AG04449 (cell line): ENCODE measurements at regions of chr17 and their contacts with region 1.

Region 1: GRCh38 chr17:78013683-78014467 is 55.4 kb downstream of the TNRC6C start:
- DNase-seq: peak; percentile 29
- H3K4me3 ChIP-seq: no peak overlapping the region
- CTCF ChIP-seq: peak; percentile 55

Region 2: GRCh38 chr17:77429919-77430752 is 583.7 kb before region 1 on chr17:
- CTCF ChIA-PET with region 1: interaction called, 11 read pairs
- POLR2A ChIA-PET with region 1: no interaction called
- DNase-seq: peak; percentile 97
- H3K4me3 ChIP-seq: no peak overlapping the region
- CTCF ChIP-seq: peak; percentile 77

Region 3: GRCh38 chr17:77528516-77529327 is 485.2 kb before region 1 on chr17:
- CTCF ChIA-PET with region 1: interaction called, 11 read pairs
- POLR2A ChIA-PET with region 1: no interaction called
- DNase-seq: no peak
- H3K4me3 ChIP-seq: peak overlapping the region; percentile 51
- CTCF ChIP-seq: no peak

Region 4: DNA sequence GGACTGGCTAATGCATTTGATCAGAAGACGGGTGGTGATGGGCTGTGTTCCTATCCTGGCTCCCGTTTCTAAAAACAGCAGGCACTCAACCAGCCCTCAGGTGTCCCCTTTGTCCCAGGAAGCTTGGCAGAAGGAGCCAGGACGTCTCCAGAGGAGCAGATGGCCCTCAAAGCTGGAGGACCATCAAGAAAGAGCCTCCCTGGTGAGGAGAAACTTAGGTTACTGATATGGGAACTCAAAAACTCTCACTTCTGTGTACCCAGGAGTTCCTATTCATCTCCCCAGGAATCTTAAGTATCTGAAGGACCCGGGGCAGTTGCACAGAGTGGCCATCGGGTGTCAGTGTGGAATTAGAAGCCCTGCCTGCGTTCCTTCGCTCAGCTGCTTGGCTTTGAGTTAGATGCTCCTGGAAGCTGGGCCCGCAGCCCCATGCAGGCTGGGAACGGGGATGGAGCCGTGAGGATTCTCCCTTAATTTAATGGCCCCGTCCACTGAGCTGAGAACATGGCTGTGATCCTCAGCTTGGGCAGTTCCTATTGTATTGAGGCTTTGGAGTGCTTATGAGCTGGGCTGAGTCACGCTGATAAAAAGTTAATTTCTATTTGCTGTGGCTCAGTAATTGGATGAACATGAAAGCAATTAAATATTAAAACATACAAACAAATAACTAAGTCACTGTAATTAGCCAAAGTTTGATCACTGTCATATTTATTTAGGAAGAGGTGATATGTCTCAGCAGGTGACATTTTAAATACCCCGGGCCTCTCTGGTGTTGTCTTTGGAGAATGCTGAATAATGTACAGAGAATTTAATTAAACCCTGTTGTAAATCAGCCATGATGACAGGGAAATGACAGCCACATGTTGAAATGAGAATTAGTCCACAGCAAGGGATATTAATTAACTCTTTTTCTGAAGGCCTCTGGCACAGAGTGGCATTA is 471.1 kb before region 1 on chr17:
- CTCF ChIA-PET with region 1: interaction called, 353 read pairs
- POLR2A ChIA-PET with region 1: no interaction called
- DNase-seq: peak; percentile 40
- H3K4me3 ChIP-seq: no peak overlapping the region
- CTCF ChIP-seq: peak; percentile 88

Region 5: DNA sequence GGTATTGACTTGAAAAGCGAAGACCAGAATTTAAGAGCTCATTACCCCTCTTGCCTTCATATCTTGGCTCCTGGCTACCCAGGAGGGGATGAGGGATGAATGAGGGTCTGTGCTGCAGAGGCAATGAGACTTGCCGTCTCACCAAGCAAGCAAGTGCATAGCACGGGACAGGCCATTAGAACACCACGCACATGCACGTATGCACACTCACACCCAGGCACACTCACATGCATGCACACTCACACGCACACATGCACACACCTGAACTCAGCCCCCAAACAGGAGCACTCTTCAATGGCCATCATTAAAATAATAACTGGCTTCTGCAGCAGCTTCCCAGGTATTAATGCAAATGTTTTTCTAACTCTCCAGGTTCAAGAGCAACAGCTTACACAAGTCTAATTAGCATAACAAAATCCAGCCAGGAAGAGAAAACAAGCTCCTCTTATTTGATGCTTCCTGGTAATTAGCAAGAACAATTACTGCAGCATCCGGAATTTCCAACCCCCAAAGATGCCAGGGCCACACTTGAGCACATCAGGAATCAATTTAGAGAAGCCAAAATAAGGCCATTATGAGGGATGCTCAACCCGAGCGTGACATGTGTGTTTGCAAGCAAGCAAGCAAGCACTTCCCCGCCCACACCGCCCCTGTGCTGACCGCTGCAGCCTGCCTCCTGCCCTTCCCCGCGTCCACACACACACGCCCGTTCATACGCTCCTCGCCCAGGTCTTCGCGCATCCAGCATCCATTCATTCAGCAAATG is 227.0 kb before region 1 on chr17:
- CTCF ChIA-PET with region 1: no interaction called
- POLR2A ChIA-PET with region 1: no interaction called
- DNase-seq: no peak
- H3K4me3 ChIP-seq: no peak overlapping the region
- CTCF ChIP-seq: no peak

Region 6: DNA sequence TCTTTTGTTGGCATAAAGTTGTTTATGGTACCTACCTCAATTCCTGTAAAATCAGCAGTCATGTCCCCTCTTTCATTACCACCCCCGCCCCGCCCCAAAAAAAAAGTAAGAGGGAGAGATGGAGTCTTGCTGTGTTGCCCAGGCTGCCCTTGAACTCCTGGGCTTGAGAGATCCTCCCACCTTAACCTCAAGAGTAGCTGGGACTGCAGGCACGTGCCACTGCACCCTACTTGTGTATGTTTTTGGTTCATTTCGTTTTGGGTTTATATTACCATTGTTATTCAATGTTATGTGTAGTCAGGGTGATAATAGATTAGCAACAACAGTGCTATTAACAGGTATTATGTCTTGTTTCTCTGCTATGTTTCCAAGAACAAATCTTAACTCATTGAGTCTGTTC is 39.5 kb before region 1 on chr17:
- CTCF ChIA-PET with region 1: interaction called, 11 read pairs
- POLR2A ChIA-PET with region 1: no interaction called
- DNase-seq: no peak
- H3K4me3 ChIP-seq: no peak overlapping the region
- CTCF ChIP-seq: no peak

Region 7: DNA sequence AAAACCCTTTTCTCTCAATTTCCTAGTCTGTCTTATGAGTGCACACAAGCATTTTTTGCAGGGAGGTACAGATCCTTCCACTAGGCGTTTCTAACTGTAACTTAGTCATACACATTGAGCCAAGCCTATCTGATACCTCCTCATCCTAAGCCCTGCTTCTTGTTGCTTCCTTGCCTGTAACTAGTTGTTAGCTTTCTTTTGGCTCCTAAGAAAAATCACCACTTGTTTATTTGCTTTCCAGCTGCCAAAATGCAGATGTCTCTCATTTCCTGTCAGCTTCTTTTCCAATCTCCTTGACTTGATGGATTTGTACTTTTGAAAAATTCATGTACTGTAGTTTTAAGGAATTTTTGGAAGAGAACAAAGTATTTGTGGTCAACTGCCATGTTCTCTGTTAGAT is 18.3 kb after region 1 on chr17:
- CTCF ChIA-PET with region 1: interaction called, 130 read pairs
- POLR2A ChIA-PET with region 1: no interaction called
- DNase-seq: no peak
- H3K4me3 ChIP-seq: no peak overlapping the region
- CTCF ChIP-seq: no peak